T-cell (primary cell): ENCODE measurements at regions of chr2 and their contacts with region 1.

Region 1: GRCh38 chr2:67726421-67726820 is 329.3 kb downstream of the ETAA1 start:
- DNase-seq: no peak
- ATAC-seq: no peak
- H3K4me3 ChIP-seq: no peak overlapping the region
- H3K4me3 Mint-ChIP-seq: no peak overlapping the region
- H3K27ac ChIP-seq: no peak overlapping the region
- H3K27ac Mint-ChIP-seq: no peak overlapping the region
- H3K4me1 ChIP-seq: no peaks in the 10 kb centered on the region
- H3K4me1 Mint-ChIP-seq: no peaks in the 10 kb centered on the region
- H3K27me3 ChIP-seq: peaks cover 0 to 6% of the 10 kb centered on the region in 2 experiments
- H3K27me3 Mint-ChIP-seq: peaks cover 0 to 4% of the 10 kb centered on the region in 2 donors

Region 2: DNA sequence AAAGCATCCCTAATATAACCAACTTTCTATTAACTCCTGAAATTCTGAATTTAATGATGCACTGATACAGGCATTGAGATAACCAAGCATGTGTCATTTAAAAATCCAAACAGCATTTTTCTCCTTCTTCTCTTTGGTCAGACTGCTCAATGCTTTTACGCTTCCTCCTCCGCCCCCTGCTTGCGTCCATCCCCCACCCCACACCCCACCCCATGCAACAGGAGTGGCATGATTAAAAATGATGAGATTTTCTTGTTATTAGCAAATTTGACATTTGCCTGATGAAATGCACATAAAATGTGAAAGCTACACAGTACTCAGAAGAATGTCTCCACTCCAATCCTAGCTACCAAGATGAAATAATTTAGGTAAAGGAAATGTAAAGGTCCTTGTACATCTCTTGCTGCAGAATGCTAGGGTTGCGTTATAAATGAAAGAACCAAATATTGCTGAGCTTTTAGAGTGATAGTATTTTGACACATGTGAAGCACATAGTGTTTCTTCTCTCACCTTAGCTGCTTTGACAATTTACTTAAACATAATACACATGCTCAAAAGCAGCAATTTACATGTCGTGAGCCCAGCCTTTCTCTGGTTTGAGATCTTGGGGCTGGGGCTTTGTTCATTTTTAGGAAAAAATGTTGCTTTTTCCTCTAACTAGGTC is 1027.7 kb before region 1 on chr2:
- CTCF ChIA-PET with region 1: interaction called in 1 of 2 experiments, 10 read pairs
- POLR2A ChIA-PET with region 1: no interaction called
- DNase-seq: no peak
- ATAC-seq: no peak
- H3K4me3 ChIP-seq: no peak overlapping the region
- H3K4me3 Mint-ChIP-seq: no peak overlapping the region
- H3K27ac ChIP-seq: no peak overlapping the region
- H3K27ac Mint-ChIP-seq: no peak overlapping the region
- H3K4me1 ChIP-seq: no peaks in the 10 kb centered on the region
- H3K4me1 Mint-ChIP-seq: no peaks in the 10 kb centered on the region
- H3K27me3 ChIP-seq: no peaks in the 10 kb centered on the region
- H3K27me3 Mint-ChIP-seq: no peaks in the 10 kb centered on the region

Region 3: DNA sequence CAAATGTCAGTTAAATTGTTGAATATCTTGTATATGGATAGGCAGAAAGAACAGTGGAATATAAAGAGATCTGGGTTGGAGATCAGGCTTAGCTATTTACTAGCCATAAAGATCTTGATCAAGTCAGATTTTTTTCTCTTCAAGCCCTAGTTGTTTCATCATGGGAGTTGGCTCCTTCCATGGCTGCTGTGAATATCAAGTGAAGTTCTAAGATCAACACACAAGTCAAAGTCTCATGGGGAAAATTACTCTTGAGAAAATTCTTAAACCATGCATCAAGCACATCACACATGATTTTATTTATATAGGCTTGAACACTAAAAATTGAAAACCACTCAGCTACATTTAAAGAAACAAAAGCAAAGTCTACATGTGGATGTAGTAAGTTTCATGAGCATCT is 256.5 kb after region 1 on chr2:
- CTCF ChIA-PET with region 1: no interaction called
- POLR2A ChIA-PET with region 1: no interaction called
- DNase-seq: no peak
- ATAC-seq: no peak
- H3K4me3 ChIP-seq: no peak overlapping the region
- H3K4me3 Mint-ChIP-seq: no peak overlapping the region
- H3K27ac ChIP-seq: no peak overlapping the region
- H3K27ac Mint-ChIP-seq: no peak overlapping the region
- H3K4me1 ChIP-seq: no peaks in the 10 kb centered on the region
- H3K4me1 Mint-ChIP-seq: no peaks in the 10 kb centered on the region
- H3K27me3 ChIP-seq: peaks cover 0 to 2% of the 10 kb centered on the region in 2 experiments
- H3K27me3 Mint-ChIP-seq: peaks cover 7 to 18% of the 10 kb centered on the region in 2 donors